ENCODE measurements at regions of chr12 and their contacts with region 1.

Region 1: GRCh38 chr12:108234158-108234557 is 105.0 kb downstream of the CMKLR1 start:
- DNase-seq: peak; percentile 16

Region 2: GRCh38 chr12:108080363-108080762 is 153.8 kb before region 1 on chr12:
- in situ Hi-C with region 1: no loop called
- DNase-seq: no peak

Region 3: GRCh38 chr12:108175310-108175709 is 58.8 kb before region 1 on chr12:
- in situ Hi-C with region 1: no loop called
- DNase-seq: peak; percentile 78

Region 4: GRCh38 chr12:108198043-108198442 is 36.1 kb before region 1 on chr12:
- in situ Hi-C with region 1: loop called (anchors 5 kb)
- DNase-seq: no peak

Region 5: DNA sequence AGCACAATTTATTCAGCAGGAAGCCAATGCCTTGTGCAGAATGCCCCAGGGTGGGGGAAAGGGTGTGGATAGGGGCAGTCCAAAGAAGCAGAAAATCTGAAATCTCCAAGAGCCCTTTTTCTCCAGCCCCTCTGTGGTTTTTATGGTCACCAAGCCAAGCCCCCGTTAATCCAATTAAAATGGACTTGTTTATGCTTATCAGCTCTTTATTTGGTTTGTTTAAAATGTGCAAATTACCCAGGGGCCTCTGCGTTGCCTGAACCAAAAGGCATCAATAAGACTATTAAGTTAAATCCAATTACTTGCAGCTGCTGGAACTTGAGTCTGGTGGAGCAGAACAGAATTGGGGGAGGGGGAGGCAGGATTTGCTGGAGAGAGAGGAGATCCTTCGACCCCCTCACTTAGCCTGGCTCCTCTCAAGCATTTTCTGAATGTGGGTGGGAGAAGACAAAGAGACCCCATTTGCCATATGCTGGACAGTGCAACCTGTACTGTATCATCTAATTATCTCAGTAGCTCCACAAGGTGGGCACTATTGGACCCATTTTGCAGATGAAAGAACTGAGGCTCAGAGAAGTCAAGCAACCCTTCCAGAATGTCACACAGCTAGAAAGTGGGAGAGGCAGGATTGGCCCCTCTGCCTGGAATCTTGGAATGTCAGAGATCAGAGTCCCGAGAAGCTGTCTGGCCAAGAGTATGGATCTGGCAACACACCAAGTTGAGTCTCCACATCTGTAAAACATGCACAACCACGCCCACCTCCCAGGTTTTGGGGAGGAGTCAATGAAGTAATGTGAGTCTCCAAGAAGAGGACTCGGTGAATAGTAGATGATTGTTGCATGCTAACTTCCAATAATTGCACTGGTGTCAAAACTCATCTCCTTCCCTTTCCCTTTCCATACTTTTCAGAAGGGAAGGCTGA is 38.1 kb after region 1 on chr12:
- in situ Hi-C with region 1: no loop called
- DNase-seq: no peak